Activated T-helper 1 cell treated with anti-CD3 and anti-CD28 coated beads, Interleukin-12 subunit alpha, Interleukin-12 subunit beta, Interleukin-2, Interleukin-4 antibody, amounts not matched to agents 30 ng/mL and 10 ng/mL and 1 ng/mL, durations not matched to agents 14 hours and 24 hours and 36 hours (primary cell): ENCODE measurements at regions of chr3 and their contacts with region 1.

Region 1: GRCh38 chr3:150546226-150547044 is at the starts of genes EIF2A and SERP1:
- DNase-seq: peak; percentile 99
- H3K4me3 Mint-ChIP-seq: peak within 1 kb of the TSS; percentile 95
- H3K27ac Mint-ChIP-seq: peak within 1 kb of the TSS; percentile 98
- H3K4me1 Mint-ChIP-seq: peaks cover 70% of the 10 kb centered on the region
- H3K27me3 Mint-ChIP-seq: no peaks in the 10 kb centered on the region
- total RNA-seq, gene EIF2A: 122 TPM in 2 replicates
- total RNA-seq, gene SERP1: 96.0 and 102 TPM in 2 replicates

Region 2: GRCh38 chr3:149752051-149752787 is 794.2 kb before region 1 on chr3 and contains the start of gene COMMD2:
- intact Hi-C with region 1: loop called (anchors 5 kb)
- DNase-seq: peak; percentile 65
- H3K4me3 Mint-ChIP-seq: peak within 1 kb of the TSS; percentile 95
- H3K27ac Mint-ChIP-seq: peak within 1 kb of the TSS; percentile 59
- H3K4me1 Mint-ChIP-seq: peaks cover 14% of the 10 kb centered on the region
- H3K27me3 Mint-ChIP-seq: peaks cover 4% of the 10 kb centered on the region
- total RNA-seq, gene COMMD2: 44.2 and 44.8 TPM in 2 replicates

Region 3: GRCh38 chr3:150022381-150023238 is 523.8 kb before region 1 on chr3:
- intact Hi-C with region 1: no loop called
- DNase-seq: no peak
- H3K4me3 Mint-ChIP-seq: no peak overlapping the region
- H3K27ac Mint-ChIP-seq: no peak overlapping the region
- H3K4me1 Mint-ChIP-seq: no peaks in the 10 kb centered on the region
- H3K27me3 Mint-ChIP-seq: peaks cover 7% of the 10 kb centered on the region

Region 4: GRCh38 chr3:150564243-150564642 is 17.8 kb after region 1 on chr3:
- intact Hi-C with region 1: loop called (anchors 2 kb)
- DNase-seq: no peak
- H3K4me3 Mint-ChIP-seq: no peak overlapping the region
- H3K27ac Mint-ChIP-seq: no peak overlapping the region
- H3K4me1 Mint-ChIP-seq: peaks cover 8% of the 10 kb centered on the region
- H3K27me3 Mint-ChIP-seq: no peaks in the 10 kb centered on the region

Region 5: DNA sequence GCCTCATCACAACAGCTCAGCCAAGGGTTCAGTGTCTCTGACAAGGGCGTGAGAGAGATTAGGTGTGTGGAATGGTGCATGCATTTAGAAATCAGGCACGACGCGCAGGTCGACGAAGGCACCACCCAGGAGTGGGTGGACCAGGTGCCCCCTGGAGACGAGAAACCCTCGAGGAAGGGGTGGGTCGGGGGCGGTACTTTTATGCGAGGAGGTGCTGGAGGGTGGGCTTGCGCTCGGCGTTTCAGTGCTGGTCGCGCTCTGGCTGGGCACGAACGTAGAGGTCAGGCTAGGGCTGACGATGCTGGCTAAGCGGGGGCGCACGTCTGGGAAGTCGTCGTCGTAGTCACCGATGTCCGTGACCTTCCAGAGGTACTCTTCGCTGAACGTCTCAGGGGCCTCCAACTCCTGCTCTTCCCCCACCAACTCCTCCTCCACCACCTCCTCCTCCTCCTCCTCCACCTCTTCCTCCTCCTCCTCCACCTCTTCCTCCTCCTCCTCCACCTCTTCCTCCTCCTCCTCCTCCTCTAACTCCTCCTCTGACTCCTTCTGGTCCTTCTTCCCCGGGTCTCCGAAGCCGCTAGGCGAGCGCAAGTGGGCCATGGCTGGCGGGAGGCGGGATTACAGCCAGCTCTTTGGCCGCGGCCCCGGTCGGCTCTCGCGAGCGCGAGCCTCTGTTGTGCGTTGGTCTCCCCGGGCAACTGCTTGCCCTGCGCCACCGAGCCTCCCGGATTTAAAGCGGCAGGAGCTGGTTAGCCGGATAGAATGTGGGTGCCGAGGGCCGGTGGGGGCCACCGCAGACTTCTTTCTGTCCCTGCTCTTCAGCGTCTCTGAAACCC is 157.1 kb after region 1 on chr3 and contains the start of gene ERICH6:
- intact Hi-C with region 1: loop called (anchors 1 kb)
- DNase-seq: peak; percentile 81
- H3K4me3 Mint-ChIP-seq: peak within 1 kb of the TSS; percentile 93
- H3K27ac Mint-ChIP-seq: peak within 1 kb of the TSS; percentile 99
- H3K4me1 Mint-ChIP-seq: peaks cover 23% of the 10 kb centered on the region
- H3K27me3 Mint-ChIP-seq: no peaks in the 10 kb centered on the region
- total RNA-seq, gene ERICH6: not detected in 2 replicates

Region 6: GRCh38 chr3:150870396-150870795 is 324.0 kb after region 1 on chr3:
- intact Hi-C with region 1: loop called (anchors 5 kb)
- DNase-seq: no peak
- H3K4me3 Mint-ChIP-seq: no peak overlapping the region
- H3K27ac Mint-ChIP-seq: no peak overlapping the region
- H3K4me1 Mint-ChIP-seq: peaks cover 2% of the 10 kb centered on the region
- H3K27me3 Mint-ChIP-seq: peaks cover 12% of the 10 kb centered on the region

Region 7: GRCh38 chr3:151282921-151283320 is 736.5 kb after region 1 on chr3:
- intact Hi-C with region 1: loop called (anchors 5 kb)
- DNase-seq: no peak
- H3K4me3 Mint-ChIP-seq: no peak overlapping the region
- H3K27ac Mint-ChIP-seq: peak overlapping the region; percentile 38
- H3K4me1 Mint-ChIP-seq: peaks cover 56% of the 10 kb centered on the region
- H3K27me3 Mint-ChIP-seq: no peaks in the 10 kb centered on the region